Activated CD8-positive, alpha-beta T cell treated with anti-CD3 and anti-CD28 coated beads, Interleukin-2, amount 10 ng/mL, durations not matched to agents 7 days and 5 days (primary cell): ENCODE measurements at regions of chr11 and their contacts with region 1.

Region 1: DNA sequence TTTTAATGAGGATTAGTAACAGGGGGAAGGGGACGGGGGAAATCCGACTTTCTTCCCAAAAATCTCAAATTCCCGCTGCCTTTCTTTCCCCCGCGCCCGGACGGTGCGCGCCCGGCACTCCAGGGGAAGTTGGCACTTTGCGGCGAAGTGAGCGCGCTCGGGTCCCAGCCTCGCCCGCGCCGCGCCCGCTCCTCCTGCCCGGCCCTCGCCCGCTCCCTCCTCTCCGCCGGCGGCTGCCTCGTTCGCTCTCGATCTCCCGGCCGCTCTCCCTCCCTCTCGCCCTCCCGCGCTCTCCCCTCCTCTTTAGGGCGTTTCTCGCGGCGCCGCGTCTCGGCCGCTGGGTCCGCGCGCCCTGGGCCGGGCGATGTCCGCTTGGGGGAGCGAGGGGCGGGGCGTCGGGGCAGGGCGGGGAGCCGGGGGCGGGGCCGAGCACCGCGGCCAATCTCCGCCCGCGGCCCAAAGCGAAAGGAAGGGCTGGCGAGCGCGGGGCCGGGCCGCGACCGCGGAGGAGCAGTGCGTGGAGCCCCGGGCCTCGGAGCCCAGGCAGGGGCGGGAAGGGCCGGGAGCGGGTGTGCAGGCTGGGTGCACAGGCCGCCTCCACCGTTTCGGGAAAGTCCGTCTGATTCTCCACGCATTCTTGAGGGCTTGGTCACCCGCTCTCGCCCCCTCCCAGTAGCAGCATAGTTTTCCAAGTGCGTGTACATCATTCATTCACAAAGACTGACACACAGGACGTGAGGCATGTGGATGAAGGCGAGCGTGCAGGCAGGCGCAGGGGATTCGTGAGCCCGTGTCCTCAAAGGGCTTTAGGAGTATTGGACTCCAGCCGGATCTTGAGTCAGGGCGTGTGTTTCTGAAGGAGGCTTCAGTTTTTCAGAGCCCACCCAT is 65.1 kb downstream of the ETS1 start:
- DNase-seq: peak; percentile 94
- ATAC-seq: peak; percentile 78
- H3K4me3 Mint-ChIP-seq: peak overlapping the region; percentile 96
- H3K27ac Mint-ChIP-seq: peak overlapping the region; percentile 92
- H3K4me1 Mint-ChIP-seq: peaks cover 44% of the 10 kb centered on the region
- H3K27me3 Mint-ChIP-seq: no peaks in the 10 kb centered on the region

Region 2: GRCh38 chr11:128323381-128323780 is 198.9 kb before region 1 on chr11:
- CTCF ChIA-PET with region 1: interaction called, 21 read pairs
- POLR2A ChIA-PET with region 1: interaction called, 8 read pairs
- DNase-seq: peak; percentile 73
- ATAC-seq: peak; percentile 25
- H3K4me3 Mint-ChIP-seq: peak overlapping the region; percentile 73
- H3K27ac Mint-ChIP-seq: peak overlapping the region; percentile 95
- H3K4me1 Mint-ChIP-seq: peaks cover 92% of the 10 kb centered on the region
- H3K27me3 Mint-ChIP-seq: no peaks in the 10 kb centered on the region

Region 3: GRCh38 chr11:128482512-128483191 is 39.6 kb before region 1 on chr11:
- CTCF ChIA-PET with region 1: interaction called, 10 read pairs
- POLR2A ChIA-PET with region 1: interaction called, 230 read pairs
- DNase-seq: peak; percentile 65
- ATAC-seq: peak; percentile 70
- H3K4me3 Mint-ChIP-seq: peak overlapping the region; percentile 63
- H3K27ac Mint-ChIP-seq: peak overlapping the region; percentile 88
- H3K4me1 Mint-ChIP-seq: peaks cover 94% of the 10 kb centered on the region
- H3K27me3 Mint-ChIP-seq: no peaks in the 10 kb centered on the region

Region 4: GRCh38 chr11:128497061-128497775 is 25.1 kb before region 1 on chr11:
- CTCF ChIA-PET with region 1: interaction called, 77 read pairs
- POLR2A ChIA-PET with region 1: interaction called, 652 read pairs
- DNase-seq: no peak
- ATAC-seq: no peak
- H3K4me3 Mint-ChIP-seq: peak overlapping the region; percentile 73
- H3K27ac Mint-ChIP-seq: peak overlapping the region; percentile 81
- H3K4me1 Mint-ChIP-seq: peaks cover 95% of the 10 kb centered on the region
- H3K27me3 Mint-ChIP-seq: no peaks in the 10 kb centered on the region

Region 5: GRCh38 chr11:128544471-128545051 is 22.3 kb after region 1 on chr11:
- CTCF ChIA-PET with region 1: interaction called, 21 read pairs
- POLR2A ChIA-PET with region 1: interaction called, 71 read pairs
- DNase-seq: no peak
- ATAC-seq: peak; percentile 21
- H3K4me3 Mint-ChIP-seq: peak overlapping the region; percentile 20
- H3K27ac Mint-ChIP-seq: no peak overlapping the region
- H3K4me1 Mint-ChIP-seq: peaks cover 46% of the 10 kb centered on the region
- H3K27me3 Mint-ChIP-seq: no peaks in the 10 kb centered on the region

Region 6: GRCh38 chr11:128593281-128593680 is 71.0 kb after region 1 on chr11:
- CTCF ChIA-PET with region 1: no interaction called
- POLR2A ChIA-PET with region 1: no interaction called
- DNase-seq: no peak
- ATAC-seq: no peak
- H3K4me3 Mint-ChIP-seq: no peak overlapping the region
- H3K27ac Mint-ChIP-seq: no peak overlapping the region
- H3K4me1 Mint-ChIP-seq: no peaks in the 10 kb centered on the region
- H3K27me3 Mint-ChIP-seq: peaks cover 14% of the 10 kb centered on the region

Region 7: DNA sequence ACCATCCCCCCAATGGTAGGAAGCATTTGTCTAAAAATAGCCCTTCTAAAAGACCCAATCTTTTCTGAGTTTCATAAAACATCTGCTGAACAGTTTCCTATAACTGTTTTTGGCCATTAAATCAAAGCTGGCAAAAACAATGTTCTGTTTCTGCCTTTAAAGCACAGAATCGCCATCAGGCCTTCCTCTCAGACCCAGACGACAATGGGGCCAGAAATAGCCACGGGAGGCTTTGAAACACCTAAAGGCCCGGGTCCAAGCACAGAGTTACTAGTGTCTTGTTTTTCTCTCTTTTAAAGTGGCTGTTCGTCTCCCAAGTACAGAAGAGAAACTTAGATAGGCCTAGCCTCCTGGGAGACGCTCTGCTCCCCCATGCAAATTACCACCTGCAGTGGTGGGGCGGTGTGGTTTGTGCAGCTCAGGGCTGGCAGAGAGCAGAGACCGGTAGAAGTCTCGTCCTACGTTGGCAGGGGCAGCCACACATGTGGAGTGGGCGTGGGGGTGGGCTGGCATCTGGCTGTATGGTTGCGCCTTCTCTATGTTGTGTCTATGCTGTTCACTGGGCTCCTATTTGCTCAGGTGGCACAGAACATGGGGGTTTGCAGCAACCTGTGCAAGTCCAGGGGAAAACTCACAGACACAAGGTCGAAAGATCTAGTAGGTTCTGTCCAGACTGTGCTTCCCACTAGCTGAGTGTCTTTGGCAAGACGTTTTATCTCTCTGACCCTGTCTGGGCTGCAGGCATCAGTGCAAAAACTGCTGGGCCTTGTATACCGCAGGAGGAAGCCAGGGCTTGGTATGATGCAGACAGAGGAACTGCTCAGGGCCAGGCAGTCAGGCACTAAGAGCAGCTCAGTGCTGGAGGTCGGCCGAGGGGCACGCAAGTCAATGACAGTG is 88.7 kb after region 1 on chr11:
- CTCF ChIA-PET with region 1: interaction called, 4 read pairs
- POLR2A ChIA-PET with region 1: interaction called, 565 read pairs
- DNase-seq: peak; percentile 69
- ATAC-seq: peak; percentile 90
- H3K4me3 Mint-ChIP-seq: peak overlapping the region; percentile 61
- H3K27ac Mint-ChIP-seq: peak overlapping the region; percentile 83
- H3K4me1 Mint-ChIP-seq: peaks cover 42% of the 10 kb centered on the region
- H3K27me3 Mint-ChIP-seq: no peaks in the 10 kb centered on the region